H1 (cell line): ENCODE measurements at regions of chr15 and their contacts with region 1.

Region 1: GRCh38 chr15:47688573-47689086 is 28.7 kb upstream of the SEMA6D start:
- DNase-seq: no peak
- H3K4me3 ChIP-seq: no peak overlapping the region
- H3K27ac ChIP-seq: no peak overlapping the region
- H3K4me1 ChIP-seq: no peaks in the 10 kb centered on the region
- H3K27me3 ChIP-seq: no peaks in the 10 kb centered on the region
- CTCF ChIP-seq: no peak
- EP300 ChIP-seq: no peak
- POLR2A ChIP-seq: no peak
- RAD21 ChIP-seq: no peak

Region 2: GRCh38 chr15:47670365-47670764 is 18.3 kb before region 1 on chr15:
- CTCF ChIA-PET with region 1: no interaction called
- POLR2A ChIA-PET with region 1: no interaction called
- DNase-seq: no peak
- H3K4me3 ChIP-seq: no peak overlapping the region
- H3K27ac ChIP-seq: no peak overlapping the region
- H3K4me1 ChIP-seq: no peaks in the 10 kb centered on the region; a peak in 1 of 7 replicates
- H3K27me3 ChIP-seq: no peaks in the 10 kb centered on the region
- CTCF ChIP-seq: no peak
- EP300 ChIP-seq: no peak
- POLR2A ChIP-seq: no peak
- RAD21 ChIP-seq: no peak

Region 3: GRCh38 chr15:47711654-47712053 is 23.0 kb after region 1 on chr15:
- CTCF ChIA-PET with region 1: interaction called, 16 read pairs
- POLR2A ChIA-PET with region 1: no interaction called
- DNase-seq: no peak
- H3K4me3 ChIP-seq: no peak overlapping the region
- H3K27ac ChIP-seq: no peak overlapping the region
- H3K4me1 ChIP-seq: peaks cover 0 to 7% (median under 1%) of the 10 kb centered on the region in 4 experiments; a peak in 2 of 7 replicates
- H3K27me3 ChIP-seq: no peaks in the 10 kb centered on the region; a peak in 1 of 7 replicates
- CTCF ChIP-seq: peak in 2 of 3 experiments; percentile 47 to 61; a peak in 2 of 4 replicates
- EP300 ChIP-seq: no peak
- POLR2A ChIP-seq: no peak
- RAD21 ChIP-seq: peak; percentile 78 to 80

Region 4: GRCh38 chr15:47736143-47736786 is 47.6 kb after region 1 on chr15:
- CTCF ChIA-PET with region 1: no interaction called
- POLR2A ChIA-PET with region 1: no interaction called
- DNase-seq: no peak
- H3K4me3 ChIP-seq: no peak overlapping the region
- H3K27ac ChIP-seq: no peak overlapping the region
- H3K4me1 ChIP-seq: peaks cover 0 to 7% (median 2%) of the 10 kb centered on the region in 4 experiments; a peak in 4 of 7 replicates
- H3K27me3 ChIP-seq: no peaks in the 10 kb centered on the region
- CTCF ChIP-seq: no peak
- EP300 ChIP-seq: no peak
- POLR2A ChIP-seq: no peak
- RAD21 ChIP-seq: no peak